Esophagus muscularis mucosa (tissue), 4 donors: ENCODE measurements at regions of chr22 and their contacts with region 1.

Region 1: DNA sequence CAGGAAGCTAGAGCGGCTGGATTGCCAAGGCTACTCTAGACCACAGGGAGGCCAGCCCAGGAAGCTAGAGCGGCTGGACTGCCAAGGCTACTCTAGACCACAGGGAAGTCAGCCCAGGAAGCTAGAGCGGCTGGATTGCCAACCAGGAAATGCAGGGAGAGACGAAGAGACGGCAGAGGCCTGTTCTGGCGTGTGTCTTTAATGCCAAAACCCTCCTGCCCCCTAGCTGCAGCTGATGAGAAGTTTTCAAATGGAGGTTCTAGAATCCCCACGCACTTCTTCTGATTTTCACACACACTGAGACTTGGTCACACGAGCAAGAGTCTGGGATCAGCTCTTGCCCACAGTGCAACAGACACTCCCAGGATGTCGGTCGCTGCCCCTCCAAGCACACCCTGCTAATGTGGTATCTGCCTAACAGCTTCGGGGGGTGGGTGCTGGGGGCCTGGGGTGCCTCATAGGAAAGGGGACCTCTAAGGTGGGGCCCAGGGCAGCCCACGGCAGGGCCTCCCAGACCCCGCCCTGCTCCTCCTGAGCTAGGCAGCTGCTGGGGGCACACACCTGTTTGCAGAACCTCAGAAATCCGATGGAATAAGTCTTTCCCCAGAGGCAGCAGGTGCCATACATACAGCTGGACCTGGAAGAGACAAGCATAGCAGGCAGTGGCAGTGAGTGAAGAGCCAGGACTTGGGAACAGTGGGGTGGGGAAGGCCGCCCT is 28.5 kb downstream of the MAFF start:
- DNase-seq: no peak
- H3K4me3 ChIP-seq: no peak overlapping the region
- H3K27ac ChIP-seq: peak overlapping the region; percentile 28 to 64 (median 47)
- H3K4me1 ChIP-seq: peaks cover 30 to 44% (median 39%) of the 10 kb centered on the region in 4 donors
- H3K27me3 ChIP-seq: no peaks in the 10 kb centered on the region
- CTCF ChIP-seq: peak; percentile 26 to 48 (median 39)
- EP300 ChIP-seq: no peak
- POLR2A ChIP-seq: no peak

Region 2: GRCh38 chr22:38114484-38115398 is 115.5 kb before region 1 on chr22:
- intact Hi-C with region 1: loop called (anchors 10 kb)
- DNase-seq: peak; percentile 94
- H3K4me3 ChIP-seq: no peak overlapping the region
- H3K27ac ChIP-seq: no peak overlapping the region
- H3K4me1 ChIP-seq: peaks cover 7 to 12% (median 9%) of the 10 kb centered on the region in 4 donors
- H3K27me3 ChIP-seq: no peaks in the 10 kb centered on the region
- CTCF ChIP-seq: peak; percentile 84 to 98 (median 90)
- EP300 ChIP-seq: no peak
- POLR2A ChIP-seq: no peak

Region 3: DNA sequence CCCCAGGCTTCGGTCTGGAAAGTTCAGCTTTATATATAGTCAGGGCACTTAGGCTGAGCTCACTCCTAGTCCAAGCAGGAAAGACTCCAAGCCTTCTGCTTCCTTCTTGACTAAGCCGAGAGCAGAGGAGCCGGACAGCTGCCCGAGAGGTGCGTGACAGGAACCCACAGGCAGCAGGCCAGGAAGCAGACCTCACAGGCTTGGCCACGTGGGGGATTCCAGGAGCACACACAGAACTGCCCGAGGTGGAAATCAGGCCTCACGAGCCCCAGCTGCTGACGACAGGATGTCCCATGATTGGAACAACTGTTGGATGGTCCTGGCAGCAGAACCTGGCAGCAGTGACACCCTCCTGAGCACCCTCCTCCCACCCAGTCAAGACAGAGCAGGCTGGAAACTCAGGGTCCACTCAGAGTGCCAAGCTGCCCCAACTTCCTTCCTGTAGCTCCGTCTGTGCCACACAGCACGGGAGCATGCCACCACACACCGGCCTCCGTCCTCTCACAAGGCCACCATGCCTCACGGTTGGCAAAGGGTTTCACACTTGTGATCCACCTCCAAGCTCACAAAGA is 54.0 kb before region 1 on chr22:
- intact Hi-C with region 1: no loop called
- DNase-seq: no peak
- H3K4me3 ChIP-seq: no peak overlapping the region
- H3K27ac ChIP-seq: peak overlapping the region; percentile 81 to 90 (median 84)
- H3K4me1 ChIP-seq: peaks cover 57 to 83% (median 79%) of the 10 kb centered on the region in 4 donors
- H3K27me3 ChIP-seq: no peaks in the 10 kb centered on the region
- CTCF ChIP-seq: no peak
- EP300 ChIP-seq: no peak
- POLR2A ChIP-seq: no peak

Region 4: DNA sequence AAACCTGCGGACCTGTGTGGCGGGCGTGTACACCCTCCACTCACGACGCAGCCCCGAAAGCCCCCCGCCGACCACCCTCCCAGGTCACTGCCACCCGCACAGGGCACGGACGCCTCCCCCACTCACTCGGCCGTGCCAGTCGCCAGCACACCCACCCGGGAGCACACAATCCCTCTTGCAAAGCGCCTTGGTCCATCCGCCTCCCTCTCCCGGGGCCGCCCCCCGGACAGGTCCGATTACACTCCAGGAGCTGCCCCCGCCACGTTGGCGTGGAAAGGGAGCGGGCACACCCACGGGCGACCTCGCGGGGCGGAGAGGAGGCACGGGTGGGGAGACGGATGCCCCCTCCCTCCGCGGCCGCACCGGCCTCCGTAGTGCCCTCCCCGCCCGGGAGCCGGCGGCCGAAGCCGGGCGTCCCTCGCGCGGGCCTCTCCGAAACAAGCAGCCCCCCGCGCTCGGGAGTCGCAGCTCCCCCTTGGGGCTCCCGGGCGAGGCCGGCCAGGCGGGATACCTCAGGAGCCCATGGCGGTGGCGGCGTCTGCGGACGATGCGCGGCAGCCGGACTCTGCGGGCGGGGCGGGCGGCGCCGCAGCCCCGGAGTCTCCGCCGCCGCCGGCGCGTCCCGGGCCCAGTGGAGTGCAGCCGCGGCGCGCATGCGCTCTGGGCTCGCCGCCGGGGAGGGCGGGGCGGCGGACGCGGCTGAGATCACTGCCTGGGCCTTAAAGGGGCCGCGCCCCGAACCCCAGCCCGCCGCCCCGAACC is 42.3 kb after region 1 on chr22 and contains the start of gene TMEM184B:
- intact Hi-C with region 1: no loop called
- DNase-seq: no peak
- H3K4me3 ChIP-seq: peak within 1 kb of the TSS; percentile 88 to 99 (median 98)
- H3K27ac ChIP-seq: peak within 1 kb of the TSS; percentile 94 to 96 (median 94)
- H3K4me1 ChIP-seq: peaks cover 49 to 60% (median 55%) of the 10 kb centered on the region in 4 donors
- H3K27me3 ChIP-seq: no peaks in the 10 kb centered on the region
- CTCF ChIP-seq: peak in 1 of 3 experiments; percentile 28
- EP300 ChIP-seq: no peak
- POLR2A ChIP-seq: peak; percentile 60
- total RNA-seq, gene TMEM184B: 39.4 to 108 (median 75.3) TPM